A673 (cell line): ENCODE measurements at regions of chr22 and their contacts with region 1.

Region 1: GRCh38 chr22:23767673-23768548 is at the start of gene CHCHD10:
- DNase-seq: peak; percentile 92
- H3K4me3 ChIP-seq: peak within 1 kb of the TSS; percentile 70
- H3K27ac ChIP-seq: peak within 1 kb of the TSS; percentile 90
- H3K4me1 ChIP-seq: peaks cover 49% of the 10 kb centered on the region
- H3K27me3 ChIP-seq: no peaks in the 10 kb centered on the region
- CTCF ChIP-seq: peak; percentile 85
- total RNA-seq, gene CHCHD10: 117 and 128 TPM in 2 replicates

Region 2: DNA sequence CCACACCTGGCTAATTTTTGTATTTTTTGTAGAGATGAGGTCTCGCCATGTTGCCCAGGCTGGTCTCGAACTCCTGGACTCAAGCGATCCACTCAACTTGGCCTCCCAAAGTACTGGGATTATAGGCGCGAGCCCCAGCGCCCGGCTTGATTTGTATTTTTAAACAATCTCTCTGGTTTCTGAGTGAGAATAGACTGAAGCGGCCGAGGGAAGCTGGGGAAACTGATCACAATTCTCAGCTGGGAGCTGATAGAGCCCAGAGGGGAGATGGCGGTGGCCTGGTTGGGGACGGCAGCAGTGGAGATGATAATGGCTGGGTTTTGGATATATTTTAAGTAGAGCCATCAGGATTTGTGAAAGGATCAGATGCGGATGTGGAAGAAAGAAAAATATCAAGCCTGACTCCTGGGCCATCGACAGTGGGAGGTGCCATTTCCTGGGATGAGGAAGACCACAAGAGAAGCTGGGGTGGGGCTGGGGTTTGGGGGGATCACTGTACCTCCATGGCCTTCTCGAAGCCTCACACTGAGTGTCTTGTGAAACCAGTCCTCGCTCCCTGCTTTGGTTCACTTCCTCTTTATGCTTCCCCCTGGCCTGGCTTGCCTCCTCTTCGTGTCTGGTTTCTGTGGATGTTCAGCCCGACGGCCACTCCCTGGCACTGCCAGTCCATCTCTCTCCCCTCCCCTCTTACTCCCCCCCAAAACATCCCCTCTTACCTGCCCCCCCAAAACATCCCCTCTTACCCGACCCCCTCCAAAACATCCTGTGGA is 239.8 kb before region 1 on chr22:
- CTCF ChIA-PET with region 1: no interaction called
- POLR2A ChIA-PET with region 1: no interaction called
- intact Hi-C with region 1: no loop called
- DNase-seq: no peak
- H3K4me3 ChIP-seq: no peak overlapping the region
- H3K27ac ChIP-seq: no peak overlapping the region
- H3K4me1 ChIP-seq: peaks cover under 1% of the 10 kb centered on the region
- H3K27me3 ChIP-seq: no peaks in the 10 kb centered on the region
- CTCF ChIP-seq: no peak

Region 3: GRCh38 chr22:23716811-23717801 is 50.8 kb before region 1 on chr22:
- CTCF ChIA-PET with region 1: no interaction called
- POLR2A ChIA-PET with region 1: no interaction called
- intact Hi-C with region 1: no loop called
- DNase-seq: peak; percentile 94
- H3K4me3 ChIP-seq: peak overlapping the region; percentile 89
- H3K27ac ChIP-seq: peak overlapping the region; percentile 84
- H3K4me1 ChIP-seq: peaks cover 4% of the 10 kb centered on the region
- H3K27me3 ChIP-seq: no peaks in the 10 kb centered on the region
- CTCF ChIP-seq: no peak

Region 4: DNA sequence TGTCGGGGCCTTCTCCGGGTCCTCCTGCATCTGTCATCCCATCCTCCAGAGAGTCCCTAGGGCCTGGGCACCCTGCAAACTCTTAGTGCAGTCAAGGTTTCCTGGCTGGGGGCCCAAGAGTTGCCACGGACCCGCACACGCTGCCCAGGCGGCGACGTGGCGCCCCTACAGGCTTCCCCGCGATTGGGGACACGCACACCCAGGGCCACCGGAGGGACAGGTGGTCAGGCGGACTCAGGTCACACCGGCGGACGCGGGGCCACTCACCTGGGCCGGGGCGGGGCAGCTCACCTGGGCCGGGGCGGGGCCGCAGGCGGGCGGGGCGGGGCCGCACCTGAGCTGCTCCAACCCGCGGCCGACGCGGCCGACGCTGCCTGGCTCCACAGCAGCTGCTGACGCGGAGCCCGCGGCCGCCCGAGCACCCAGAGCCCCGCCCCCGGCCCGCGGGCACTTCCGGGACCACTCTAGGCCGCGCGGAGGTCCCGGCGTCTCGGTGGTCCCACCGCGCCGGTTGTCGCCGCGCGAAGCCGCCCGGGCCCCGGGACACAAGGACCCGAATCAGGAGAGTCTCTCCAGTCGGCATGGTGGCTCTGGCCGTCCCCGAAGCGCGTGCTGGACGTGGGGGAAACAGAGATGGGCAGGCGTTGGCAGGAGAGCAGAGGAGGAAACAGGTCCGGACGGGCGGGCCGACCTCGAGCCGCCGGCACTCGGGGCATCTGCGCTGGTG is 17.0 kb before region 1 on chr22 and contains the start of gene ZNF70:
- CTCF ChIA-PET with region 1: no interaction called
- POLR2A ChIA-PET with region 1: no interaction called
- intact Hi-C with region 1: no loop called
- DNase-seq: peak; percentile 93
- H3K4me3 ChIP-seq: peak within 1 kb of the TSS; percentile 75
- H3K27ac ChIP-seq: peak within 1 kb of the TSS; percentile 96
- H3K4me1 ChIP-seq: peaks cover 4% of the 10 kb centered on the region
- H3K27me3 ChIP-seq: no peaks in the 10 kb centered on the region
- CTCF ChIP-seq: peak; percentile 44
- total RNA-seq, gene ZNF70: 9.6 and 9.7 TPM in 2 replicates

Region 5: GRCh38 chr22:23849009-23850006 is 81.4 kb after region 1 on chr22:
- CTCF ChIA-PET with region 1: interaction called, 11 read pairs
- POLR2A ChIA-PET with region 1: no interaction called
- intact Hi-C with region 1: loop called (anchors 5 kb)
- DNase-seq: peak; percentile 91
- H3K4me3 ChIP-seq: peak overlapping the region; percentile 19
- H3K27ac ChIP-seq: no peak overlapping the region
- H3K4me1 ChIP-seq: peaks cover 4% of the 10 kb centered on the region
- H3K27me3 ChIP-seq: no peaks in the 10 kb centered on the region
- CTCF ChIP-seq: peak; percentile 98

Region 6: GRCh38 chr22:23857606-23858483 is 89.9 kb after region 1 on chr22 and contains the start of gene SLC2A11:
- CTCF ChIA-PET with region 1: interaction called, 10 read pairs
- POLR2A ChIA-PET with region 1: no interaction called
- intact Hi-C with region 1: no loop called
- DNase-seq: peak; percentile 98
- H3K4me3 ChIP-seq: peak within 1 kb of the TSS; percentile 57
- H3K27ac ChIP-seq: peak within 1 kb of the TSS; percentile 35
- H3K4me1 ChIP-seq: peaks cover 7% of the 10 kb centered on the region
- H3K27me3 ChIP-seq: no peaks in the 10 kb centered on the region
- CTCF ChIP-seq: peak; percentile 18; the same call in 1 of the 2 replicates
- total RNA-seq, gene SLC2A11: 4.9 and 6.2 TPM in 2 replicates